ENCODE measurements at regions of chr11 and their contacts with region 1.

Region 1: GRCh38 chr11:10540923-10541560 is at the start of gene RNF141:
- DNase-seq: peak; percentile 85 to 96 (median 94)
- ATAC-seq: peak; percentile 95
- H3K4me3 Mint-ChIP-seq: peak within 1 kb of the TSS; percentile 82 to 93 (median 90)
- H3K27ac Mint-ChIP-seq: peak within 1 kb of the TSS; percentile 81 to 98 (median 94)
- H3K4me1 Mint-ChIP-seq: peaks cover 8 to 58% (median 21%) of the 10 kb centered on the region in 4 donors
- H3K27me3 Mint-ChIP-seq: peaks cover 0 to 2% (median 0%) of the 10 kb centered on the region in 5 donors
- polyA plus RNA-seq, gene RNF141: 20.5 to 22.9 (median 22.8) TPM

Region 2: GRCh38 chr11:10561043-10561818 is 20.2 kb after region 1 on chr11:
- POLR2A ChIA-PET with region 1: no interaction called
- DNase-seq: no peak
- ATAC-seq: no peak
- H3K4me3 Mint-ChIP-seq: no peak overlapping the region
- H3K27ac Mint-ChIP-seq: no peak overlapping the region
- H3K4me1 Mint-ChIP-seq: peaks cover 0 to 7% (median 0%) of the 10 kb centered on the region in 4 donors
- H3K27me3 Mint-ChIP-seq: peaks cover 0 to 9% (median 2%) of the 10 kb centered on the region in 5 donors

Region 3: GRCh38 chr11:10651656-10652381 is 110.8 kb after region 1 on chr11:
- POLR2A ChIA-PET with region 1: interaction called, 12 read pairs
- DNase-seq: no peak
- ATAC-seq: no peak
- H3K4me3 Mint-ChIP-seq: no peak overlapping the region
- H3K27ac Mint-ChIP-seq: no peak overlapping the region
- H3K4me1 Mint-ChIP-seq: peaks cover 0 to 39% (median 0%) of the 10 kb centered on the region in 4 donors
- H3K27me3 Mint-ChIP-seq: no peaks in the 10 kb centered on the region

Measured in naive thymus-derived CD8-positive, alpha-beta T cell (primary cell).